ENCODE measurements at regions of chr11 and their contacts with region 1.

Region 1: GRCh38 chr11:7688238-7688826 is 15.0 kb upstream of the CYB5R2 start:
- DNase-seq: no peak
- H3K4me3 Mint-ChIP-seq: no peak overlapping the region
- H3K27ac Mint-ChIP-seq: no peak overlapping the region
- H3K4me1 Mint-ChIP-seq: peaks cover 8% of the 10 kb centered on the region
- H3K27me3 Mint-ChIP-seq: peaks cover 38% of the 10 kb centered on the region

Region 2: DNA sequence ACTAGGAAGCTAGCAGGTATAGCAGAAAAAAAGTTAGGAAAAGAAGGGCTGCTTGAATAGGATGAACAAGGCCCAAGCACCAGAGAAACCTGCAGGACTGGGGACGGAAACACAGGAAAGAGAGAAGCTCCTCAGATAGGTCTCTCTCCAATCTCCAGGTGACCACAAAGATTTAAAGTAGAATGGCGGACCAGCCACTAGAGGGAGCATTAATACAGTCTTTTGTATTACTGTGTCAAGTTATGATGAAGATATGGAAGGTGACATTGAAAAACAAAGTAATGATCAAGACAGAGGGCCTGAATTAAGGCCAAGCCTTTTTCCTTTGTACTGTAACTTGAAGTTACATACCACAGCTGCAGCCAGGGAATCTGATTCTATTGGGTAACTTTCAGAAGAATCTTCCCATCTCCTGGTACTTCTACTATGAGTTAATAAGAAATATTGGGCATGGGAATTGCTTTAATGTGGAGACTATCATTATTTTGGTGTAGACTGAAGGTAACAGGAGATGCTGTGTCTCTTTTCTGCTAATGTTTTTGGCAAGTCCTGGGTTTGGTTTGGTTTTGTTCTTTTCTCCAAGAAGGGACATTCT is 950.4 kb before region 1 on chr11:
- CTCF ChIA-PET with region 1: no interaction called
- POLR2A ChIA-PET with region 1: no interaction called
- intact Hi-C with region 1: loop called (anchors 10 kb)
- DNase-seq: peak; percentile 67
- H3K4me3 Mint-ChIP-seq: no peak overlapping the region
- H3K27ac Mint-ChIP-seq: peak overlapping the region; percentile 53
- H3K4me1 Mint-ChIP-seq: peaks cover 89% of the 10 kb centered on the region
- H3K27me3 Mint-ChIP-seq: no peaks in the 10 kb centered on the region

Region 3: DNA sequence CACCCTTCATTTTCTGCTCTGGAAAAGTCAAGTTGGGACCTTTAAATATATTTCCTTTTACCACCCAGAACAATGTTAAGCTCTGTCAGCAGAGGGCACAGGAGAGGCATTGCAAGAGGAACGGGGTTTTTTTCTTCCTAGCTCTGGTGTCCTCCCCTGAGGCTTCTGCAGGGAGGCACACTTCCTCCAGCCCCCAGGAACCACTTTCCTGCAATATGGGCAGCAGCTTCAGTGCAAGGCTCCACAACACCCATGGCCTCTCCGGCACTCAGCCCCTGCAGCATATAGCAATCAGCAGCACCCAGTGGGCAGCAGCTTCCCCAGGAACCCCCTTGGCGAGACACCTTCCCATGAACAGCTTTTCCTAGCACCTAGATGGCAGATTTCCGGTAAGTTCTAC is 335.2 kb before region 1 on chr11:
- CTCF ChIA-PET with region 1: no interaction called
- POLR2A ChIA-PET with region 1: no interaction called
- intact Hi-C with region 1: loop called (anchors 5 kb)
- DNase-seq: peak; percentile 25
- H3K4me3 Mint-ChIP-seq: no peak overlapping the region
- H3K27ac Mint-ChIP-seq: no peak overlapping the region
- H3K4me1 Mint-ChIP-seq: no peaks in the 10 kb centered on the region
- H3K27me3 Mint-ChIP-seq: peaks cover 1% of the 10 kb centered on the region

Region 4: GRCh38 chr11:7571640-7572000 is 116.7 kb before region 1 on chr11:
- CTCF ChIA-PET with region 1: interaction called, 5 read pairs
- POLR2A ChIA-PET with region 1: no interaction called
- intact Hi-C with region 1: loop called (anchors 2 kb)
- DNase-seq: peak; percentile 44
- H3K4me3 Mint-ChIP-seq: no peak overlapping the region
- H3K27ac Mint-ChIP-seq: no peak overlapping the region
- H3K4me1 Mint-ChIP-seq: peaks cover 11% of the 10 kb centered on the region
- H3K27me3 Mint-ChIP-seq: peaks cover 1% of the 10 kb centered on the region

Region 5: GRCh38 chr11:7665473-7666291 is 22.6 kb before region 1 on chr11:
- CTCF ChIA-PET with region 1: interaction called, 13 read pairs
- POLR2A ChIA-PET with region 1: no interaction called
- intact Hi-C with region 1: no loop called
- DNase-seq: peak; percentile 85
- H3K4me3 Mint-ChIP-seq: no peak overlapping the region
- H3K27ac Mint-ChIP-seq: no peak overlapping the region
- H3K4me1 Mint-ChIP-seq: peaks cover under 1% of the 10 kb centered on the region
- H3K27me3 Mint-ChIP-seq: no peaks in the 10 kb centered on the region

Region 6: GRCh38 chr11:8658321-8659057 is 970.2 kb after region 1 on chr11:
- CTCF ChIA-PET with region 1: no interaction called
- POLR2A ChIA-PET with region 1: no interaction called
- intact Hi-C with region 1: no loop called
- DNase-seq: no peak
- H3K4me3 Mint-ChIP-seq: no peak overlapping the region
- H3K27ac Mint-ChIP-seq: no peak overlapping the region
- H3K4me1 Mint-ChIP-seq: no peaks in the 10 kb centered on the region
- H3K27me3 Mint-ChIP-seq: no peaks in the 10 kb centered on the region

Measured in activated CD4-positive, alpha-beta memory T cell treated with anti-CD3 and anti-CD28 coated beads for 36 hours (primary cell).